T-cell (primary cell): ENCODE measurements at regions of chr7 and their contacts with region 1.

Region 1: DNA sequence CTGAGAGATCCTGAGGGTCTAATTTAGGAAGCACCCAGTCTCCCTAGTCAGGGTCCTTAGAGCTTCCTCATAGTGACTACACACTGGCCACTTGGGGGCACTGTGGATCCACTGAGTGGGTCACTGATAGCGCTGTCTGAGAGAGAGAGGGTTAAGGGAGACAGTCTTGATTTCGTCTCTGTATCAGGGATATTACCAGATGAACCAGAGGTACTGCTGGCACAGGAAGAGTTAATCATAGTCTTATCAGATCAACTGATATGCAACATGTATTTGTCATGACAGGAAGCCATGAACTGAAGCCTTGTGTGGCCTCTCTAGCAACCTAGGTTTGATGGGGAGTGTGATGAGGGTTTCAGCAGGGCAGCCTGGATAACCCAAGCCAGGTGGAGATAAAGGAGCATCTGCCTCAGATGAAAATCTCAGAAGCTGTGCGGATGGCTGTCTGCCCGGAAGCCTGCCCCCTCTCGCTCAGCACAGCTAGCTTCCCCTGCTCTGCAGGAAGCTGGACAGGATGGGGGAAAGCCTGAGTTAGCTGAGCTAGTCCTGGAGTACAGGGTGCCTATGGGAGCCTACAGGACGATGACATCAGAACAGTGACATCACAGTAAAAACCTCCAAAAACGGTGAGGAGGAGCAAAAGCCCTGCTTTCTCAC is 214.0 kb upstream of the PRSS1 start:
- DNase-seq: peak in 34 of 35 experiments; percentile 29 to 81 (median 53)
- ATAC-seq: peak; percentile 79 to 85 (median 82)
- H3K4me3 ChIP-seq: peak overlapping the region in 1 of 2 donors; percentile 8
- H3K4me3 Mint-ChIP-seq: peak overlapping the region; percentile 66 to 75 (median 68)
- H3K27ac ChIP-seq: peak overlapping the region; percentile 52
- H3K27ac Mint-ChIP-seq: peak overlapping the region; percentile 72 to 86
- H3K4me1 ChIP-seq: peaks cover 14 to 16% of the 10 kb centered on the region in 2 experiments
- H3K4me1 Mint-ChIP-seq: peaks cover 27 to 33% (median 28%) of the 10 kb centered on the region in 3 donors
- H3K27me3 ChIP-seq: no peaks in the 10 kb centered on the region
- H3K27me3 Mint-ChIP-seq: no peaks in the 10 kb centered on the region

Region 2: GRCh38 chr7:142557971-142558582 is 22.8 kb after region 1 on chr7:
- CTCF ChIA-PET with region 1: interaction called in 1 of 2 experiments, 10 read pairs
- POLR2A ChIA-PET with region 1: interaction called in 1 of 2 experiments, 7 read pairs
- DNase-seq: peak in 32 of 35 experiments; percentile 11 to 74 (median 40)
- ATAC-seq: peak; percentile 71 to 86 (median 73)
- H3K4me3 ChIP-seq: peak overlapping the region in 1 of 2 donors; percentile 6
- H3K4me3 Mint-ChIP-seq: peak overlapping the region in 2 of 3 donors; percentile 47 to 57
- H3K27ac ChIP-seq: no peak overlapping the region
- H3K27ac Mint-ChIP-seq: peak overlapping the region in 1 of 2 donors; percentile 3
- H3K4me1 ChIP-seq: no peaks in the 10 kb centered on the region
- H3K4me1 Mint-ChIP-seq: peaks cover 0 to 3% (median 3%) of the 10 kb centered on the region in 3 donors
- H3K27me3 ChIP-seq: peaks cover 0 to 3% of the 10 kb centered on the region in 2 experiments
- H3K27me3 Mint-ChIP-seq: peaks cover 6 to 9% of the 10 kb centered on the region in 2 donors

Region 3: DNA sequence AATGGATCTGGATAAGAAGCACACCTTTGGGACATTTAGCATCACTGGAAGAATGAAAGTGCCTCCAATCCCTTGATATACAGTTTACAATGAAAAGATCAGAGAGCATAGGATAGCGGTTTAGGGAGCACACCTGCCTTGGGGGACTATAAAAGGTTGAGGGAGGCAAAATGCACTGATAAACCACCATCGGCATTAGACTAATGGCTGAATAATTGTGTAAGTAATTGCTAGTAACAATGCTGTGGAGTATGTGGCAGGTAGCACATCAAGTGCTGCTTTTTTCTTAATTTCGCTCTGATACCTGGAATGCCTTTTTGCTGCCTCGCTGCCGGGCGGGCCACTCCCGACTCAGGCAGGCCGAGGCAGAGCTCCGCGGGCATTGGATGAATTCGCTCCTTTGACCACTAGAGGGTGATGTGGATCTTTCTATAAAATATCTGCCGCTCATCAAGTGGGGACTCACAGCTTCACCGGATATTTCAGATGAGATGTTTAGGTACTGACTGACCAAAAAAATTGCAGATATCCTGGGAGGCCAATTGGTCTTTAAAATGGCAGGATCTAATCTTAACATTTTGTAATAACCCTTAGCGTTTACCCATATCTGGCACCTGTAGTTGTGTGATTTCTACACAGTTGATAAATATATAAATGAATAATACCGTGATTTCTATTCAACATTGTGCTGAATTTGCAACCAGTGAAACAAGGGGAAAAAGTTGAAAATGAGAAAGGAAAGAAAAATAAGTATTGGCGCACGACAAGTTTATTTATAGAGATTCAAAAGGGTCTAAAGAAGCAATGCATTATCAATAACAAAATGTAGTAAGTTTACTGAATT is 97.3 kb after region 1 on chr7:
- CTCF ChIA-PET with region 1: interaction called in 1 of 2 experiments, 12 read pairs
- POLR2A ChIA-PET with region 1: no interaction called
- DNase-seq: peak in 32 of 35 experiments; percentile 9 to 82 (median 42)
- ATAC-seq: peak; percentile 50 to 75 (median 70)
- H3K4me3 ChIP-seq: no peak overlapping the region
- H3K4me3 Mint-ChIP-seq: peak overlapping the region in 1 of 3 donors; percentile 34
- H3K27ac ChIP-seq: no peak overlapping the region
- H3K27ac Mint-ChIP-seq: peak overlapping the region in 1 of 2 donors; percentile 52
- H3K4me1 ChIP-seq: peaks cover 0 to 2% of the 10 kb centered on the region in 2 experiments
- H3K4me1 Mint-ChIP-seq: peaks cover 9 to 17% (median 17%) of the 10 kb centered on the region in 3 donors
- H3K27me3 ChIP-seq: no peaks in the 10 kb centered on the region
- H3K27me3 Mint-ChIP-seq: peaks cover 0 to 3% of the 10 kb centered on the region in 2 donors

Region 4: GRCh38 chr7:142703655-142704305 is 168.5 kb after region 1 on chr7:
- CTCF ChIA-PET with region 1: no interaction called
- POLR2A ChIA-PET with region 1: no interaction called
- DNase-seq: no peak
- ATAC-seq: no peak
- H3K4me3 ChIP-seq: no peak overlapping the region
- H3K4me3 Mint-ChIP-seq: no peak overlapping the region
- H3K27ac ChIP-seq: no peak overlapping the region
- H3K27ac Mint-ChIP-seq: no peak overlapping the region
- H3K4me1 ChIP-seq: peaks cover 4 to 10% of the 10 kb centered on the region in 2 experiments
- H3K4me1 Mint-ChIP-seq: peaks cover 23 to 47% (median 26%) of the 10 kb centered on the region in 3 donors
- H3K27me3 ChIP-seq: no peaks in the 10 kb centered on the region
- H3K27me3 Mint-ChIP-seq: no peaks in the 10 kb centered on the region

Region 5: GRCh38 chr7:142817506-142817905 is 282.3 kb after region 1 on chr7:
- CTCF ChIA-PET with region 1: no interaction called
- POLR2A ChIA-PET with region 1: no interaction called
- DNase-seq: no peak
- ATAC-seq: no peak
- H3K4me3 ChIP-seq: no peak overlapping the region
- H3K4me3 Mint-ChIP-seq: no peak overlapping the region
- H3K27ac ChIP-seq: no peak overlapping the region
- H3K27ac Mint-ChIP-seq: peak overlapping the region in 1 of 2 donors; percentile 58
- H3K4me1 ChIP-seq: peaks cover 19 to 21% of the 10 kb centered on the region in 2 experiments
- H3K4me1 Mint-ChIP-seq: peaks cover 25 to 45% (median 42%) of the 10 kb centered on the region in 3 donors
- H3K27me3 ChIP-seq: no peaks in the 10 kb centered on the region
- H3K27me3 Mint-ChIP-seq: peaks cover 0 to 14% of the 10 kb centered on the region in 2 donors